GM12878 (cell line): ENCODE measurements at regions of chr2 and their contacts with region 1.

Region 1: GRCh38 chr2:171893824-171894611 is at the start of gene SLC25A12:
- DNase-seq: no peak
- ATAC-seq: peak; percentile 96
- H3K4me3 ChIP-seq: peak within 1 kb of the TSS; percentile 100
- H3K27ac ChIP-seq: peak within 1 kb of the TSS; percentile 78
- H3K4me1 ChIP-seq: no peaks in the 10 kb centered on the region
- H3K27me3 ChIP-seq: no peaks in the 10 kb centered on the region
- CTCF ChIP-seq: no peak
- EP300 ChIP-seq: no peak
- POLR2A ChIP-seq: peak; percentile 89
- RAD21 ChIP-seq: no peak
- polyA plus RNA-seq, gene SLC25A12: 20.9 to 27.4 TPM

Region 2: GRCh38 chr2:171878481-171878993 is 15.5 kb before region 1 on chr2:
- CTCF ChIA-PET with region 1: interaction called, 19 read pairs
- POLR2A ChIA-PET with region 1: interaction called, 4 read pairs
- RAD21 ChIA-PET with region 1: interaction called, 4 read pairs
- SMC1A ChIA-PET with region 1: interaction called, 13 read pairs
- in situ Hi-C with region 1: no loop called
- intact Hi-C with region 1: no loop called
- DNase-seq: no peak
- ATAC-seq: peak; percentile 35
- H3K4me3 ChIP-seq: peak overlapping the region; percentile 7; the same call in 1 of the 2 replicates
- H3K27ac ChIP-seq: peak overlapping the region; percentile 39
- H3K4me1 ChIP-seq: peaks cover 14% of the 10 kb centered on the region
- H3K27me3 ChIP-seq: no peaks in the 10 kb centered on the region
- CTCF ChIP-seq: no peak
- EP300 ChIP-seq: no peak
- POLR2A ChIP-seq: no peak
- RAD21 ChIP-seq: no peak

Region 3: GRCh38 chr2:171922230-171923022 is 28.4 kb after region 1 on chr2 and contains the start of gene HAT1:
- CTCF ChIA-PET with region 1: interaction called, 9 read pairs
- POLR2A ChIA-PET with region 1: interaction called, 12 read pairs
- RAD21 ChIA-PET with region 1: interaction called, 7 read pairs
- SMC1A ChIA-PET with region 1: interaction called, 5 read pairs
- in situ Hi-C with region 1: no loop called
- intact Hi-C with region 1: loop called (anchors 5 kb)
- DNase-seq: peak; percentile 90
- ATAC-seq: peak; percentile 97
- H3K4me3 ChIP-seq: peak within 1 kb of the TSS; percentile 85
- H3K27ac ChIP-seq: peak within 1 kb of the TSS; percentile 87
- H3K4me1 ChIP-seq: 0 out of 2 replicates have a peak, but pooled peaks cover 2% of the 10 kb centered on the region
- H3K27me3 ChIP-seq: no peaks in the 10 kb centered on the region
- CTCF ChIP-seq: no peak
- EP300 ChIP-seq: no peak
- POLR2A ChIP-seq: peak; percentile 69
- RAD21 ChIP-seq: no peak
- polyA plus RNA-seq, gene HAT1: 177 to 190 TPM